CD8-positive, alpha-beta T cell (primary cell): ENCODE measurements at regions of chr10 and their contacts with region 1.

Region 1: DNA sequence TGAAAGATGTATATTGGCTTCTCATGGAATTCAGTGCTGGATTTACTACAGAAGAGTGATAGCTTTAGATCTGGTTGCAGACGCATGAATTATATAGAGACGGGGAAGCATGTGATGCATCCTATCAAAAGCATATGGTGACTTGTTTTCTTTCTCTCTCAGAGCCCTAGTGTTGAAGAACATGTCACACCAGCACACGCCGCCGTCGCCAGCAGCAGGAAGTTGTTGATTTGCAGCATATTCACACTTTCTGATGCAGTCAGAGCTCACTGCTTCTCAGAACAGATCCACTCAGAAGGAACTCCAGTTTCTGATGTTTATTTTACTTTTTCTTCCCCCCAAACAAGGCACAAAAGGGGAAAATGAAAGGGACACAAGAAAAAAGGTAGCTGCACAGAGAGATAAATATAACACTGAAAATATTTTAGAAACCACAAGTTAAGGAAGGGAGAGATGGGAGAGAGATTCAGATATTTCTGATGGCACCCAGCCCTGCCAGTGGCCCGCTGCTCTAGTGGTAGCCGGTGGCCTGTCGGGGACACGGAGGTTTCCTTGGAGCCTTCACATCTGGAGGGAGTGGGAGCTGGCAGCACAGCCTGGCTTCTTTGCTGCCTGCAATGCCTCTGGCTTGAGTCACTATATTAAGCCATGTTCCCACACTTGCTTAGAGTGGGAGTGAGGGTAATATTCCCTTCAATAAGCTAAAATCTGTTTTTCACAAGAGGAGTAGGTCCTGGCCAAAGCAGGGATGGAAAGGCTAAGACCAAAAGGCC is 123.2 kb downstream of the NRP1 start:
- DNase-seq: peak in 6 of 9 experiments; percentile 4 to 52 (median 15)
- ATAC-seq: peak; percentile 38
- H3K4me3 ChIP-seq: no peak overlapping the region
- H3K4me3 Mint-ChIP-seq: no peak overlapping the region
- H3K27ac ChIP-seq: peak overlapping the region in 1 of 2 experiments; percentile 20
- H3K27ac Mint-ChIP-seq: peak overlapping the region; percentile 84
- H3K4me1 ChIP-seq: no peaks in the 10 kb centered on the region
- H3K4me1 Mint-ChIP-seq: peaks cover 12% of the 10 kb centered on the region
- H3K27me3 ChIP-seq: no peaks in the 10 kb centered on the region
- H3K27me3 Mint-ChIP-seq: no peaks in the 10 kb centered on the region
- CTCF ChIP-seq: no peak

Region 2: DNA sequence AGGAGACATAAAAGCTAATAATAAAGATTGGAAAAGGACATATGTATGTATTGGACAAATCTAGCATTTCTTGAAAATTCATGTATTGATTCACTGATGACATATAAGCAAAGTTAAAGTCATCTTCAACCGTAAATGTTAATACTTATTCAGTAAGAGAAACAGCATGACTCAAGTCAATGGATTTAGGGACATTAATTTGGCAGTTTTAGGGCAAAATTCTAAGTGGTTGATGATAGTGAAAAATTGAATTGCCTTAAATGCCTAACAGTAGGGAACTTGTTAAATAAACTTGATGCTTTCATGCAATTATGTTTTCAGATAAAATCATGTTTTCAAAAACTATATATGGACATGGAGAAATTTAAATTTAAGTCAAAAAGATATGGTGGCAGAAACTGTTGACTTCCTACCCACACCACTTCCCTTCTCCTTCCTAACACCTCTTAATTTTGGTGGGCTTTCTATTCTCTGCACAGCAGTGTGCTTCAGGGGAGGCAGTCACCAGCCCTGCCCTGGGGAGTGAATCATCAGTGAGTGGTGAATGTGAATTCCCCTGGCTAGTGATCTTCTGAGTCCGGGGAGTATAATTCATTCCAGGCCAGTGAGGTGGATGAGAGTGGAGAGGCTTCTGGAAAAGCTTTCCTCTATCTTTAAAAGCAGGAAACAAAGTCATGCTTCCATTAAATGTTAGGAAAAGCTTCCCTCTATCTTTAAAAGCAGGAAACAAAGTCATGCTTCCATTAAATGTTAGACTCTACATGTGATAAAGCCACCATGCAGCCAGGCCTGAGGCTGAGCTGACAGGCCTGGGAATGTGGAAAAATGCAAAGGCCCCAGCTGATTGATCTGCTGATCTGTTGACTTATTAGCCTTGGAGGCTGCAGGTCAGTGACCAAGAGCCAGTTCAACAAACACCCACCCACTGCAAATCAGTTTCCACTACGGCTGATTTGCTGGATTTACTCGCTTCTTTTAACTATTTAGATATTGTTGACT is 228.1 kb before region 1 on chr10:
- CTCF ChIA-PET with region 1: no interaction called
- POLR2A ChIA-PET with region 1: no interaction called
- intact Hi-C with region 1: no loop called
- DNase-seq: peak in 6 of 9 experiments; percentile 9 to 84 (median 34)
- ATAC-seq: peak; percentile 21
- H3K4me3 ChIP-seq: no peak overlapping the region
- H3K4me3 Mint-ChIP-seq: no peak overlapping the region
- H3K27ac ChIP-seq: peak overlapping the region in 1 of 2 experiments; percentile 94
- H3K27ac Mint-ChIP-seq: peak overlapping the region; percentile 64
- H3K4me1 ChIP-seq: peaks cover 25% of the 10 kb centered on the region
- H3K4me1 Mint-ChIP-seq: peaks cover 34% of the 10 kb centered on the region
- H3K27me3 ChIP-seq: no peaks in the 10 kb centered on the region
- H3K27me3 Mint-ChIP-seq: no peaks in the 10 kb centered on the region
- CTCF ChIP-seq: no peak

Region 3: GRCh38 chr10:33263453-33263852 is 52.2 kb after region 1 on chr10:
- CTCF ChIA-PET with region 1: no interaction called
- POLR2A ChIA-PET with region 1: no interaction called
- intact Hi-C with region 1: loop called in 1 of 2 experiments (anchors 10 kb)
- DNase-seq: no peak
- ATAC-seq: no peak
- H3K4me3 ChIP-seq: no peak overlapping the region
- H3K4me3 Mint-ChIP-seq: no peak overlapping the region
- H3K27ac ChIP-seq: no peak overlapping the region
- H3K27ac Mint-ChIP-seq: no peak overlapping the region
- H3K4me1 ChIP-seq: no peaks in the 10 kb centered on the region
- H3K4me1 Mint-ChIP-seq: peaks cover 3% of the 10 kb centered on the region
- H3K27me3 ChIP-seq: no peaks in the 10 kb centered on the region
- H3K27me3 Mint-ChIP-seq: no peaks in the 10 kb centered on the region
- CTCF ChIP-seq: no peak